ENCODE measurements at regions of chr1 and their contacts with region 1.

Region 1: GRCh38 chr1:147757015-147758000 is 3.1 kb downstream of the GJA5 start:
- DNase-seq: peak; percentile 85 to 98
- H3K4me3 ChIP-seq: peak overlapping the region; percentile 19; the same call in 1 of the 2 replicates
- H3K27ac ChIP-seq: peak overlapping the region; percentile 92
- H3K4me1 ChIP-seq: peaks cover 75% of the 10 kb centered on the region
- H3K27me3 ChIP-seq: no peaks in the 10 kb centered on the region
- CTCF ChIP-seq: no peak

Region 2: GRCh38 chr1:147093411-147093810 is 663.9 kb before region 1 on chr1:
- CTCF ChIA-PET with region 1: no interaction called
- POLR2A ChIA-PET with region 1: no interaction called
- intact Hi-C with region 1: no loop called
- DNase-seq: no peak
- H3K4me3 ChIP-seq: no peak overlapping the region
- H3K27ac ChIP-seq: no peak overlapping the region
- H3K4me1 ChIP-seq: 0 out of 2 replicates have a peak, but pooled peaks cover 7% of the 10 kb centered on the region
- H3K27me3 ChIP-seq: no peaks in the 10 kb centered on the region
- CTCF ChIP-seq: no peak

Region 3: GRCh38 chr1:147670317-147671041 is 86.8 kb before region 1 on chr1 and contains the start of gene ACP6:
- CTCF ChIA-PET with region 1: no interaction called
- POLR2A ChIA-PET with region 1: no interaction called
- intact Hi-C with region 1: loop called (anchors 5 kb)
- DNase-seq: peak; percentile 92 to 93
- H3K4me3 ChIP-seq: peak within 1 kb of the TSS; percentile 65
- H3K27ac ChIP-seq: peak within 1 kb of the TSS; percentile 66
- H3K4me1 ChIP-seq: peaks cover 46% of the 10 kb centered on the region
- H3K27me3 ChIP-seq: no peaks in the 10 kb centered on the region
- CTCF ChIP-seq: no peak
- total RNA-seq, gene ACP6: 71.4 and 85.3 TPM in 2 replicates